K562 (cell line): ENCODE measurements at regions of chr4 and their contacts with region 1.

Region 1: DNA sequence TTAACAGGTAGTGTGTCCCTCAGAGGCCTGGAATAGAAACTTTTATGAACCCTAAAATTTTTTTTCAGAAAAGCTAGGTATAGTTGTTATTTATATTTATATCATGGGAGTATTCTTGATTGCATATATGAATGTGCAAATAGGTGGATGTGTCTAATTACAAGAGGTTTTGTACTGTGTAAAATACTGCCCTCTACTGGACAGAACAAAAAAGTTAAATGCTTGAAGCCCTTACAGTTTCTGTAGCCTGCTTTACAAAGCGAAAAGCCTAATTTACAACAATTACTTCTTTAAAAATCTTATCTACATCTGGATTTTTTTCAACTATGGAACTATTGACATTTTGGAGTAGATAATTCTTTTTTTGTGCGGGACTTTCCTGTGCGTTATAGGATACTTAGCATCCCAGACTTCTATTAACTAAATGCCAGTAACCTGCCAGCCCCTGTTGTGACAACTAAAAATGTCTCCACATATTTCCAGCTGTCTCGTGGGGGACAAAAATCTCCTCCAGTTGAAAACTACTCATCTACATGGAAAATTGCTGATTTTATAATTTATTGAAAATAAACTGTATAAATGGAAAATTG is 35.1 kb downstream of the ENPEP start:
- DNase-seq: peak; percentile 54 to 59 (median 58)
- ATAC-seq: peak; percentile 86
- H3K4me3 ChIP-seq: no peak overlapping the region
- H3K27ac ChIP-seq: no peak overlapping the region
- H3K4me1 ChIP-seq: no peaks in the 10 kb centered on the region
- H3K27me3 ChIP-seq: no peaks in the 10 kb centered on the region; a peak in 1 of 5 replicates
- CTCF ChIP-seq: peak; percentile 38 to 72 (median 41); a peak in 4 of 6 replicates
- EP300 ChIP-seq: no peak
- POLR2A ChIP-seq: no peak
- RAD21 ChIP-seq: peak; percentile 65 to 71

Region 2: GRCh38 chr4:109214622-109215301 is 1296.3 kb before region 1 on chr4:
- CTCF ChIA-PET with region 1: no interaction called
- POLR2A ChIA-PET with region 1: no interaction called
- in situ Hi-C with region 1: no loop called
- intact Hi-C with region 1: no loop called
- DNase-seq: no peak
- ATAC-seq: no peak
- H3K4me3 ChIP-seq: no peak overlapping the region
- H3K27ac ChIP-seq: no peak overlapping the region
- H3K4me1 ChIP-seq: no peaks in the 10 kb centered on the region; a peak in 1 of 5 replicates
- H3K27me3 ChIP-seq: no peaks in the 10 kb centered on the region
- CTCF ChIP-seq: no peak
- EP300 ChIP-seq: no peak
- POLR2A ChIP-seq: no peak
- RAD21 ChIP-seq: no peak

Region 3: GRCh38 chr4:109998867-109999584 is 512.0 kb before region 1 on chr4:
- CTCF ChIA-PET with region 1: interaction called, 252 read pairs
- POLR2A ChIA-PET with region 1: no interaction called
- in situ Hi-C with region 1: loop called (anchors 5 kb)
- intact Hi-C with region 1: loop called (anchors 1 kb)
- DNase-seq: peak; percentile 42 to 76 (median 50)
- ATAC-seq: peak; percentile 91
- H3K4me3 ChIP-seq: no peak overlapping the region
- H3K27ac ChIP-seq: no peak overlapping the region
- H3K4me1 ChIP-seq: no peaks in the 10 kb centered on the region; a peak in 3 of 5 replicates
- H3K27me3 ChIP-seq: no peaks in the 10 kb centered on the region
- CTCF ChIP-seq: peak; percentile 62 to 93 (median 88); a peak in 5 of 6 replicates
- EP300 ChIP-seq: no peak
- POLR2A ChIP-seq: no peak
- RAD21 ChIP-seq: peak; percentile 83 to 85

Region 4: GRCh38 chr4:110310795-110311194 is 200.3 kb before region 1 on chr4:
- CTCF ChIA-PET with region 1: interaction called, 9 read pairs
- POLR2A ChIA-PET with region 1: no interaction called
- in situ Hi-C with region 1: loop called (anchors 10 kb)
- intact Hi-C with region 1: loop called (anchors 1 kb)
- DNase-seq: no peak
- ATAC-seq: peak; percentile 80
- H3K4me3 ChIP-seq: no peak overlapping the region
- H3K27ac ChIP-seq: no peak overlapping the region
- H3K4me1 ChIP-seq: no peaks in the 10 kb centered on the region
- H3K27me3 ChIP-seq: no peaks in the 10 kb centered on the region; a peak in 1 of 5 replicates
- CTCF ChIP-seq: no peak
- EP300 ChIP-seq: no peak
- POLR2A ChIP-seq: no peak
- RAD21 ChIP-seq: no peak

Region 5: GRCh38 chr4:110344162-110344561 is 166.9 kb before region 1 on chr4:
- CTCF ChIA-PET with region 1: interaction called, 9 read pairs
- POLR2A ChIA-PET with region 1: interaction called, 3 read pairs
- in situ Hi-C with region 1: no loop called
- intact Hi-C with region 1: loop called (anchors 2 kb)
- DNase-seq: peak in 2 of 4 experiments; percentile 6 to 15
- ATAC-seq: peak; percentile 73
- H3K4me3 ChIP-seq: no peak overlapping the region
- H3K27ac ChIP-seq: no peak overlapping the region
- H3K4me1 ChIP-seq: no peaks in the 10 kb centered on the region
- H3K27me3 ChIP-seq: no peaks in the 10 kb centered on the region
- CTCF ChIP-seq: peak; percentile 20 to 50 (median 25); a peak in 2 of 6 replicates
- EP300 ChIP-seq: no peak
- POLR2A ChIP-seq: no peak
- RAD21 ChIP-seq: peak; percentile 51 to 53